ENCODE measurements at regions of chr7 and their contacts with region 1.

Region 1: DNA sequence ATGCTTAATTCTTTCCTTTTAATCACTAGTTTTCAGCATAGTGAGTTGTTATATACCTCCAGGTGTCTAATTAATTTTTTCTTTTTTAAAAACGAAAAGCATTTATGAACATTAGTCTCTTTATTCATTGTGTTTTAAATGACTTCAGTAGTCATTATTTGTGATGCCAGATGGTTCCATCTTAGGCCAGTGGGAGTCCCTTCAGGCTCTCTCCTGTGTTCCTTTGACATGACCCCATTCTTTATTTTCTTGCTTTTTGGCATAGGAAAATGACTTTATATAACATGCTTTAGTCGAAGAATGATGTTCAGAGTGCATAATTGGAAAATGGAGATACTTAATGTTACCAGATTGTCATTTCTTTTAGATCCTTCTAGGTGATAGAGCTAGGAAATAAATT is 24.4 kb downstream of the MKLN1 start:
- DNase-seq: no peak
- ATAC-seq: no peak
- H3K4me3 Mint-ChIP-seq: no peak overlapping the region
- H3K27ac Mint-ChIP-seq: no peak overlapping the region
- H3K4me1 Mint-ChIP-seq: peaks cover 57% of the 10 kb centered on the region
- H3K27me3 Mint-ChIP-seq: no peaks in the 10 kb centered on the region
- CTCF ChIP-seq: no peak

Region 2: DNA sequence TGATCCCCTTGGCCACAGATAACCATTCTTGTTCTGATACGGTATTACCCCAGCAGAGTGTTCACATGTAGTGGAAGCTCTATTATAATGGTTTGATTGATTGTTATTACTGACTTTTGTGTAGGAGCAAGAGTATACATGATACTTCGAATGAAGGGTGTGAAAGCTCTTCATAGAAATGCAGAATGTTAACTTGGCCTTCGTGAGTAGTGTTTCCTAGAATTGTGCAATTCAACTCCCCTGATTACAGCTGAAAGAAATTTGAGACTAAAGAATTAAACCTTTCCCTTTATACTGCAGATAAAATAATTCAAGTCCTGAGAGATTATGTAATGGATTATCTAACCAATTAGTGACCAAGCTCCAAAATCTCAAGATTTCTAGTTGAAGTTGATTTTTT is 13.8 kb after region 1 on chr7:
- CTCF ChIA-PET with region 1: no interaction called
- POLR2A ChIA-PET with region 1: no interaction called
- intact Hi-C with region 1: loop called (anchors 2 kb)
- DNase-seq: no peak
- ATAC-seq: no peak
- H3K4me3 Mint-ChIP-seq: no peak overlapping the region
- H3K27ac Mint-ChIP-seq: no peak overlapping the region
- H3K4me1 Mint-ChIP-seq: peaks cover 80% of the 10 kb centered on the region
- H3K27me3 Mint-ChIP-seq: no peaks in the 10 kb centered on the region
- CTCF ChIP-seq: no peak

Measured in activated B cell treated with CpG ODN at 0.5 μM for 24 hours (primary cell).